ENCODE measurements at regions of chr10 and their contacts with region 1.

Region 1: DNA sequence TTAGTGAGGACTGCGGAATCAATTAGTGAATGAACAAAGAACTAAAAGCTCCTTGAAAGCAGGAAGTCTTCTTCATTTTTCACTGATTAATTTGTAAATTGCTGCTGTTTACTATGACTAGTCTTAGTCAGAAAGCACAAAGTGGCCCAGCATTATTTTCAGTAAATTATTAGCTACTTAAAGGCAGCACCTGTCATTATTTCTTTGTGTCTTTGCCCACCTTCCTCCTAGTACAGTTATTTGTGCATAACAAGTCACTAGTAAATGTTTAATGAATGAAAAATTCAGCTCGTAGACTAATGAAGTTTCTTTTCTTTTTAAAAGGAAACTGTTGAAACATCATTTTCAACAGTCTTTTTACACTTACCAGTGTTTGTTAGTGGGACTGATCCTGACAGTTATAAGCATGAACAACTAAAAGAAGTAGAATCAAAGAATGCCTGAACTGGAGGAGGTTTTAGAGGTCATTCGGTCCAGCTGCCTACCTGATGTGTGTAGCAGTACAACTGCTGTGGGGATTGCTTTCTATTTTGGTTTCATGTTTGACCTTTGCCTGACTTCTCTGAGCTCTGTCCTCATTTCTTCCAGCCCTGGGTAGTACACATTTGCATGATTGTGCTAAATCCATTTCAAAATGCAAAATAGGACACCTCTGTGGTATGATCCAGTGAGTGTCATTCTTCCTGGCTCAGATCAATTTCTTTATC is 140.0 kb upstream of the PHYHIPL start:
- DNase-seq: peak; percentile 75
- ATAC-seq: peak; percentile 94
- H3K4me3 ChIP-seq: peak overlapping the region in 1 of 3 experiments; percentile 29; a peak in 1 of 6 replicates
- H3K27ac ChIP-seq: peak overlapping the region; percentile 87
- H3K4me1 ChIP-seq: peaks cover 66% of the 10 kb centered on the region
- H3K27me3 ChIP-seq: no peaks in the 10 kb centered on the region
- CTCF ChIP-seq: no peak
- EP300 ChIP-seq: 0 out of 4 replicates have a peak, but pooled peaks of 1 of the 2 experiments have one; percentile 14
- POLR2A ChIP-seq: no peak
- RAD21 ChIP-seq: no peak

Region 2: GRCh38 chr10:58993480-58994221 is 42.8 kb before region 1 on chr10:
- CTCF ChIA-PET with region 1: no interaction called
- POLR2A ChIA-PET with region 1: interaction called, 11 read pairs
- in situ Hi-C with region 1: no loop called
- intact Hi-C with region 1: loop called (anchors 1 kb)
- DNase-seq: no peak
- ATAC-seq: no peak
- H3K4me3 ChIP-seq: peak overlapping the region in 1 of 3 experiments; percentile 23; a peak in 1 of 6 replicates
- H3K27ac ChIP-seq: peak overlapping the region; percentile 89
- H3K4me1 ChIP-seq: peaks cover 96% of the 10 kb centered on the region
- H3K27me3 ChIP-seq: no peaks in the 10 kb centered on the region
- CTCF ChIP-seq: no peak
- EP300 ChIP-seq: no peak
- POLR2A ChIP-seq: no peak
- RAD21 ChIP-seq: no peak

Region 3: DNA sequence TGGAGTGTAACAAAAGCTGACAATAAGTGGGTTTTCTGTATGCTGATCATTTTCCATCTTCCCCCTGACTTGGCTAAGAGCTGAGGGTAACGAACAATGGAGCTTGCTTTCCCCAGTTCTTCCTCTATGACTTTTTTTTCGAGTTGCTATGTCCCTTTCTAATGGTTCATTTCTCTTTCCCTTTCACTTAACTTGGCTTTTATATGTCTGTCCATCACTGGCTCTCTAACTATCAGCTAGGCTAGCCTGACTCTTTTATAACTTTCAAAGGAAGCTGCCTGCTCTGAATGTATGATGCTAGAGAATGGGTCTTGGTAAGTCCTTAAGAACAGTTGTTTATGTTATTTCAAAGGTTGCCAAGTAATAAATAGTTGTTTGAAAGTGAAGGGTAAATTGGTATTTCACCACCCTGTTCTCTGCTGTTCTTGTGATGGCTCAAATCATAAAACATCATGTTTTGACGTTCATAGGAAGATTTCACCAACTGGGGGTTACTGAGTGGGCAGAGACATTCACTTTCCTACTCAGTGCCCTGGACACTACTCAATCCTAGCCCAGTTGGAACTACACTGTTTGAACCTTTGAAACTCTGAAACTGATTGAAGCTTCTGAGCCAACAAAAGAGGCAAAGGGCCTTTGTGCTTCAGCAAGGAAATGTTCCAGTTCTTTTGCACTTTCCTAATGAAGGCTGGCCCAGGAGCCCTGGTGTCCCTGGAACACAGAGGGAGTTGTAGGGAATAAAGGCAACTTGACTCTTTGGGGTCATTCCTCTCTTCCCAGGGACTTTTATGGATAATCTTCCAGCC is 54.6 kb after region 1 on chr10:
- CTCF ChIA-PET with region 1: no interaction called
- POLR2A ChIA-PET with region 1: no interaction called
- in situ Hi-C with region 1: no loop called
- intact Hi-C with region 1: no loop called
- DNase-seq: no peak
- ATAC-seq: no peak
- H3K4me3 ChIP-seq: no peak overlapping the region
- H3K27ac ChIP-seq: no peak overlapping the region
- H3K4me1 ChIP-seq: peaks cover 9% of the 10 kb centered on the region; the same call in 1 of the 2 replicates
- H3K27me3 ChIP-seq: no peaks in the 10 kb centered on the region
- CTCF ChIP-seq: no peak
- EP300 ChIP-seq: no peak
- POLR2A ChIP-seq: no peak
- RAD21 ChIP-seq: no peak